ENCODE measurements at regions of chr6 and their contacts with region 1.

Region 1: DNA sequence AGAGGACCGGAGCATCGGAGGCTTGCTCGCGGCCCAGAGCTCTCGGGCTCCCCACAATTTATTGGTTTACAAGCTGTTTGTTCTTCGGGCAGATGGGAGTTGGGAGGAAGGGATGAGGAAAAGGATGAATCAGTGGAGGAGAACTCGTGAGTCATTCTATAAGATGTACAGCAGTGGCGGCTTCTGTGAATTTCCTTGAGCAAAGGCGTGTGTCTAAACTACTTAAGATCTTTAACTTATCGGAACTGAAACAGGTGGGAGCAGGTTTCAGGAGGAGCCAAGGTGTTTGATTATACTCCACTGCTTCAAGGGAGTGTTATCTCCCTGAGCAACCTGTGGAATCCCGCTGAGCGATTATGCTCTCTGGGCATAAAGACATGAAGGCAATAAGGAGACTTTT is 50.5 kb upstream of the IBTK start:
- ATAC-seq: no peak
- H3K4me3 ChIP-seq: no peak overlapping the region
- H3K27ac ChIP-seq: no peak overlapping the region
- H3K4me1 ChIP-seq: no peaks in the 10 kb centered on the region

Region 2: GRCh38 chr6:82525775-82526537 is 227.9 kb after region 1 on chr6:
- in situ Hi-C with region 1: loop called in 1 of 9 experiments (anchors 25 kb)
- ATAC-seq: peak in 6 of 8 experiments; percentile 22 to 84 (median 74)
- H3K4me3 ChIP-seq: no peak overlapping the region
- H3K27ac ChIP-seq: no peak overlapping the region
- H3K4me1 ChIP-seq: peaks cover 7 to 25% of the 10 kb centered on the region in 2 donors

Region 3: GRCh38 chr6:82612475-82613039 is 314.5 kb after region 1 on chr6:
- in situ Hi-C with region 1: no loop called
- ATAC-seq: peak in 7 of 8 experiments; percentile 67 to 91 (median 86)
- H3K4me3 ChIP-seq: no peak overlapping the region
- H3K27ac ChIP-seq: peak overlapping the region in 1 of 2 donors; percentile 37
- H3K4me1 ChIP-seq: peaks cover 20 to 34% of the 10 kb centered on the region in 2 donors

Measured in motor neuron (in vitro differentiated cells).